ENCODE measurements at regions of chr3 and their contacts with region 1.

Region 1: DNA sequence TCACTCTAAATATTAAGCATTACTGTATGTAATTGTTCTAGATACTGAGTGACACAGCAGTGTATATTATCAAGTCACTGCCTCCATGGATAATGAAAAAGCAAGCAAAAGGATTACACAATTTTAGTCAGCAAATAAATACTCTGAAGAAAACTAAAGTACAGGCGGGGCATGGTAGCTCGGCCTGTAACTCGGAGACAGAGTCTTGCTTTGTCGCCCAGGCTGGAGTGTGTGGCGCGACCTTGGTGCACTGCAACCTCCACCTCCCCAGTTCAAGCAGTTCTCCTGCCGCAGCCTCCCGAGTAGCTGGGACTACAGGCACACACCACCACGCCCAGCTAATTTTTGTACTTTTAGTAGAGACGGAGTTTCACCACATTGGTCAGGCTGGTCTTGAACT is 32.7 kb downstream of the RBM6 start:
- DNase-seq: no peak
- ATAC-seq: no peak
- H3K4me3 ChIP-seq: no peak overlapping the region
- H3K27ac ChIP-seq: no peak overlapping the region
- H3K4me1 ChIP-seq: no peaks in the 10 kb centered on the region
- H3K27me3 ChIP-seq: no peaks in the 10 kb centered on the region
- CTCF ChIP-seq: no peak
- POLR2A ChIP-seq: no peak
- RAD21 ChIP-seq: no peak

Region 2: DNA sequence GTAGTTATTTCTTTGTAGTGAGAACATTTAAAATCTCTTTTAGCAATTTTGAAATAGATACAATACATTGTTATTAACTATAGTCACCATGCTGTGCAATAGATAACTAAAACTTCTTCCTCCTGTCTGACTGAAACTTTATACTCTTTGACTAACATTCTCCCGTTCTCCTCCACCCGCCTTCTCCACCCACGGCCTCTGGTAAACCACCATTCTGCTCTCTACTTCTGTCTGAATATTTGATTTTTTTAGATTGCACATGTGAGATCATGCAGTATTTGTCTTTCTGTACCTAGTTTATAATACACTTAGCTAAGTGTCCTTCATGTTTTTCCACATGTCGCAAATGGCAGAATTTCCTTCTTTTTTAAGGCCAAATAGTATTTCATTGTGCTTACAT is 43.3 kb after region 1 on chr3:
- CTCF ChIA-PET with region 1: no interaction called
- POLR2A ChIA-PET with region 1: no interaction called
- RAD21 ChIA-PET with region 1: no interaction called
- intact Hi-C with region 1: loop called (anchors 1 kb)
- DNase-seq: no peak
- ATAC-seq: no peak
- H3K4me3 ChIP-seq: no peak overlapping the region
- H3K27ac ChIP-seq: no peak overlapping the region
- H3K4me1 ChIP-seq: 0 out of 4 replicates have a peak, but pooled peaks cover 0 to 5% of the 10 kb centered on the region in 2 experiments
- H3K27me3 ChIP-seq: no peaks in the 10 kb centered on the region
- CTCF ChIP-seq: no peak
- POLR2A ChIP-seq: no peak
- RAD21 ChIP-seq: no peak